Dorsolateral prefrontal cortex (tissue), 120 donors: ENCODE measurements at regions of chr21 and their contacts with region 1.

Region 1: GRCh38 chr21:26185021-26185420 is 14.5 kb upstream of the APP start:
- DNase-seq: no peak
- H3K4me3 ChIP-seq: no peak overlapping the region
- H3K27ac ChIP-seq: no peak overlapping the region
- H3K27me3 ChIP-seq: no peaks in the 10 kb centered on the region
- CTCF ChIP-seq: no peak

Region 2: GRCh38 chr21:25790122-25790877 is 394.7 kb before region 1 on chr21:
- intact Hi-C with region 1: loop called in 1 of 2 experiments (anchors 10 kb)
- DNase-seq: peak in 1 of 10 donors; percentile 34
- H3K4me3 ChIP-seq: peak overlapping the region; percentile 3 to 70 (median 51)
- H3K27ac ChIP-seq: peak overlapping the region in 50 of 59 donors; percentile 17 to 86 (median 66)
- H3K27me3 ChIP-seq: no peaks in the 10 kb centered on the region
- CTCF ChIP-seq: peak in 55 of 56 donors; percentile 29 to 78 (median 59)

Region 3: GRCh38 chr21:26366781-26367180 is 181.8 kb after region 1 on chr21:
- intact Hi-C with region 1: loop called in 1 of 2 experiments (anchors 10 kb)
- DNase-seq: no peak
- H3K4me3 ChIP-seq: no peak overlapping the region
- H3K27ac ChIP-seq: no peak overlapping the region
- H3K27me3 ChIP-seq: no peaks in the 10 kb centered on the region
- CTCF ChIP-seq: no peak

Region 4: GRCh38 chr21:27154451-27155129 is 969.6 kb after region 1 on chr21:
- intact Hi-C with region 1: no loop called
- DNase-seq: no peak
- H3K4me3 ChIP-seq: no peak overlapping the region
- H3K27ac ChIP-seq: no peak overlapping the region
- H3K27me3 ChIP-seq: peaks cover 0 to 4% (median 0%) of the 10 kb centered on the region in 45 donors
- CTCF ChIP-seq: no peak